CD8-positive, alpha-beta T cell (primary cell): ENCODE measurements at regions of chr13 and their contacts with region 1.

Region 1: GRCh38 chr13:21638319-21639282 is 32.3 kb upstream of the FGF9 start:
- DNase-seq: peak in 6 of 9 experiments; percentile 5 to 57 (median 47)
- ATAC-seq: no peak
- H3K4me3 ChIP-seq: no peak overlapping the region
- H3K4me3 Mint-ChIP-seq: no peak overlapping the region
- H3K27ac ChIP-seq: no peak overlapping the region
- H3K27ac Mint-ChIP-seq: no peak overlapping the region
- H3K4me1 ChIP-seq: no peaks in the 10 kb centered on the region
- H3K4me1 Mint-ChIP-seq: no peaks in the 10 kb centered on the region
- H3K27me3 ChIP-seq: no peaks in the 10 kb centered on the region
- H3K27me3 Mint-ChIP-seq: peaks cover 6% of the 10 kb centered on the region
- CTCF ChIP-seq: peak; percentile 86

Region 2: GRCh38 chr13:21616880-21617279 is 21.7 kb before region 1 on chr13:
- CTCF ChIA-PET with region 1: interaction called, 33 read pairs
- POLR2A ChIA-PET with region 1: no interaction called
- intact Hi-C with region 1: no loop called
- DNase-seq: no peak
- ATAC-seq: no peak
- H3K4me3 ChIP-seq: no peak overlapping the region
- H3K4me3 Mint-ChIP-seq: no peak overlapping the region
- H3K27ac ChIP-seq: no peak overlapping the region
- H3K27ac Mint-ChIP-seq: no peak overlapping the region
- H3K4me1 ChIP-seq: no peaks in the 10 kb centered on the region
- H3K4me1 Mint-ChIP-seq: no peaks in the 10 kb centered on the region
- H3K27me3 ChIP-seq: no peaks in the 10 kb centered on the region
- H3K27me3 Mint-ChIP-seq: peaks cover 23% of the 10 kb centered on the region
- CTCF ChIP-seq: no peak

Region 3: GRCh38 chr13:21749410-21749809 is 110.8 kb after region 1 on chr13:
- CTCF ChIA-PET with region 1: no interaction called
- POLR2A ChIA-PET with region 1: no interaction called
- intact Hi-C with region 1: loop called in 1 of 2 experiments (anchors 10 kb)
- DNase-seq: no peak
- ATAC-seq: no peak
- H3K4me3 ChIP-seq: no peak overlapping the region
- H3K4me3 Mint-ChIP-seq: no peak overlapping the region
- H3K27ac ChIP-seq: no peak overlapping the region
- H3K27ac Mint-ChIP-seq: no peak overlapping the region
- H3K4me1 ChIP-seq: no peaks in the 10 kb centered on the region
- H3K4me1 Mint-ChIP-seq: no peaks in the 10 kb centered on the region
- H3K27me3 ChIP-seq: peaks cover 0 to 3% of the 10 kb centered on the region in 2 experiments
- H3K27me3 Mint-ChIP-seq: peaks cover 12% of the 10 kb centered on the region
- CTCF ChIP-seq: no peak

Region 4: GRCh38 chr13:21974741-21975140 is 336.1 kb after region 1 on chr13:
- CTCF ChIA-PET with region 1: no interaction called
- POLR2A ChIA-PET with region 1: no interaction called
- intact Hi-C with region 1: no loop called
- DNase-seq: no peak
- ATAC-seq: no peak
- H3K4me3 ChIP-seq: no peak overlapping the region
- H3K4me3 Mint-ChIP-seq: no peak overlapping the region
- H3K27ac ChIP-seq: no peak overlapping the region
- H3K27ac Mint-ChIP-seq: no peak overlapping the region
- H3K4me1 ChIP-seq: no peaks in the 10 kb centered on the region
- H3K4me1 Mint-ChIP-seq: no peaks in the 10 kb centered on the region
- H3K27me3 ChIP-seq: no peaks in the 10 kb centered on the region
- H3K27me3 Mint-ChIP-seq: no peaks in the 10 kb centered on the region
- CTCF ChIP-seq: no peak

Region 5: GRCh38 chr13:22173610-22174009 is 535.0 kb after region 1 on chr13:
- CTCF ChIA-PET with region 1: no interaction called
- POLR2A ChIA-PET with region 1: no interaction called
- intact Hi-C with region 1: loop called in 1 of 2 experiments (anchors 10 kb)
- DNase-seq: no peak
- ATAC-seq: no peak
- H3K4me3 ChIP-seq: no peak overlapping the region
- H3K4me3 Mint-ChIP-seq: no peak overlapping the region
- H3K27ac ChIP-seq: no peak overlapping the region
- H3K27ac Mint-ChIP-seq: no peak overlapping the region
- H3K4me1 ChIP-seq: no peaks in the 10 kb centered on the region
- H3K4me1 Mint-ChIP-seq: peaks cover 5% of the 10 kb centered on the region
- H3K27me3 ChIP-seq: no peaks in the 10 kb centered on the region
- H3K27me3 Mint-ChIP-seq: peaks cover 2% of the 10 kb centered on the region
- CTCF ChIP-seq: no peak

Region 6: DNA sequence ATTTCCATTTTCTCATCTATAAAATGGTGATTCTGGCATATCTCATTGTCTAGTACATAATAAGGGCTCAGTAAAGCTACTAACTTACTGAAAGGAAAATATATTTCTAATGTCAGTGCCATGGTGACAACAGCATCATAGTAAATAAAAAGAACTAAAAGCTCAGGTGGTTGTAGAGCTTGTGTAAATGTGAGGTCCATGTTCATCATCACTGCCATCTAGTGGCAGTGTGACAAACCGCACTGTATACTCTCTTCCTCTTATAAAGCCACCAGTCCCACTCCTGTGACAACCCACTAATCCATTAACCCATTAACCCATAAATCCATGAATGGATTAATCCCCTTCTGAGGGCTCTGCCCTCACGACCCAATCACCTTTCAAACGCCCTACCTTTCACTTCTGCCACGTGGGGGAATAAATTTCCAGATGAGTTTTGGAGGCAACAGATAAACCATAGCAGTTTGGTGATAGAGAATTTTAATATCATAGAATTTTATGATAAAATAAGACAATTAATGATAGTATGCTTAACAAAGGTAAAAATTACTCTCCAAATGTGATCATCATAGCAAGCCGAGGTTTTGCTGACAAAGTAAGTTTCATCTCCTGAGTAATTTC is 1381.7 kb after region 1 on chr13:
- CTCF ChIA-PET with region 1: no interaction called
- POLR2A ChIA-PET with region 1: no interaction called
- intact Hi-C with region 1: loop called in 1 of 2 experiments (anchors 5 kb)
- DNase-seq: peak in 5 of 9 experiments; percentile 3 to 57 (median 16)
- ATAC-seq: no peak
- H3K4me3 ChIP-seq: no peak overlapping the region
- H3K4me3 Mint-ChIP-seq: no peak overlapping the region
- H3K27ac ChIP-seq: no peak overlapping the region
- H3K27ac Mint-ChIP-seq: no peak overlapping the region
- H3K4me1 ChIP-seq: no peaks in the 10 kb centered on the region
- H3K4me1 Mint-ChIP-seq: no peaks in the 10 kb centered on the region
- H3K27me3 ChIP-seq: no peaks in the 10 kb centered on the region
- H3K27me3 Mint-ChIP-seq: peaks cover 9% of the 10 kb centered on the region
- CTCF ChIP-seq: peak; percentile 78